CD4-positive, alpha-beta memory T cell (primary cell): ENCODE measurements at regions of chrX and their contacts with region 1.

Region 1: GRCh38 chrX:1580735-1581531 is 10.5 kb upstream of the AKAP17A start:
- DNase-seq: peak; percentile 70 to 78 (median 75)
- H3K4me3 ChIP-seq: no peak overlapping the region
- H3K4me3 Mint-ChIP-seq: peak overlapping the region in 6 of 8 donors; percentile 25 to 71 (median 58)
- H3K27ac ChIP-seq: no peak overlapping the region
- H3K27ac Mint-ChIP-seq: peak overlapping the region; percentile 17 to 87 (median 70)
- H3K4me1 ChIP-seq: peaks cover 60% of the 10 kb centered on the region
- H3K4me1 Mint-ChIP-seq: peaks cover 11 to 22% (median 16%) of the 10 kb centered on the region in 4 donors
- H3K27me3 ChIP-seq: no peaks in the 10 kb centered on the region
- H3K27me3 Mint-ChIP-seq: no peaks in the 10 kb centered on the region

Region 2: GRCh38 chrX:1246816-1247215 is 334.1 kb before region 1 on chrX:
- CTCF ChIA-PET with region 1: no interaction called
- POLR2A ChIA-PET with region 1: no interaction called
- intact Hi-C with region 1: loop called (anchors 1 kb)
- DNase-seq: peak; percentile 67 to 78 (median 72)
- H3K4me3 ChIP-seq: no peak overlapping the region
- H3K4me3 Mint-ChIP-seq: peak overlapping the region in 3 of 8 donors; percentile 30 to 80 (median 44)
- H3K27ac ChIP-seq: no peak overlapping the region
- H3K27ac Mint-ChIP-seq: peak overlapping the region in 6 of 7 donors; percentile 37 to 90 (median 75)
- H3K4me1 ChIP-seq: peaks cover 26% of the 10 kb centered on the region
- H3K4me1 Mint-ChIP-seq: peaks cover 16 to 32% (median 23%) of the 10 kb centered on the region in 4 donors
- H3K27me3 ChIP-seq: no peaks in the 10 kb centered on the region
- H3K27me3 Mint-ChIP-seq: no peaks in the 10 kb centered on the region

Region 3: DNA sequence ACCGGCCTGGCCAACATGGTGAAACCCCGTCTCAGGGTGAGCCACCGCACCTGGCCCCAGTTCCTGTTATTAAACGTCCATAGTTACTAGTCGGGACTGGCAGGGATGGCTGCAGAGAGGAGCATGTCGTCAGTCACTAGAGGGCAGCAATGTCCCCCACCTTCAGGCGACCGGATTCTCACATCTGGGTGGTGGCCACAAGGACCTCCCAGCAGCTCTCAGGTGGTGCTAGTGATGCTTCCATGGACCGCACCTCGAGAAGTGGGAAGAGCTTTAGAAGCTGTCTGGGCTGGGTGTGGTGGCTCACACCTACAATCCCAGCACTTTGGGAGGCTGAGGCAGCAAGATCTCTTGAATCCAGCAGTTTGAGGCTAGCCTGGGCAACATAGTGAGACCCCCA is 257.6 kb before region 1 on chrX:
- CTCF ChIA-PET with region 1: no interaction called
- POLR2A ChIA-PET with region 1: no interaction called
- intact Hi-C with region 1: loop called (anchors 5 kb)
- DNase-seq: peak; percentile 33 to 49 (median 47)
- H3K4me3 ChIP-seq: no peak overlapping the region
- H3K4me3 Mint-ChIP-seq: no peak overlapping the region
- H3K27ac ChIP-seq: no peak overlapping the region
- H3K27ac Mint-ChIP-seq: no peak overlapping the region
- H3K4me1 ChIP-seq: no peaks in the 10 kb centered on the region
- H3K4me1 Mint-ChIP-seq: peaks cover 0 to 5% (median 3%) of the 10 kb centered on the region in 4 donors
- H3K27me3 ChIP-seq: no peaks in the 10 kb centered on the region
- H3K27me3 Mint-ChIP-seq: peaks cover 8 to 9% of the 10 kb centered on the region in 2 donors

Region 4: DNA sequence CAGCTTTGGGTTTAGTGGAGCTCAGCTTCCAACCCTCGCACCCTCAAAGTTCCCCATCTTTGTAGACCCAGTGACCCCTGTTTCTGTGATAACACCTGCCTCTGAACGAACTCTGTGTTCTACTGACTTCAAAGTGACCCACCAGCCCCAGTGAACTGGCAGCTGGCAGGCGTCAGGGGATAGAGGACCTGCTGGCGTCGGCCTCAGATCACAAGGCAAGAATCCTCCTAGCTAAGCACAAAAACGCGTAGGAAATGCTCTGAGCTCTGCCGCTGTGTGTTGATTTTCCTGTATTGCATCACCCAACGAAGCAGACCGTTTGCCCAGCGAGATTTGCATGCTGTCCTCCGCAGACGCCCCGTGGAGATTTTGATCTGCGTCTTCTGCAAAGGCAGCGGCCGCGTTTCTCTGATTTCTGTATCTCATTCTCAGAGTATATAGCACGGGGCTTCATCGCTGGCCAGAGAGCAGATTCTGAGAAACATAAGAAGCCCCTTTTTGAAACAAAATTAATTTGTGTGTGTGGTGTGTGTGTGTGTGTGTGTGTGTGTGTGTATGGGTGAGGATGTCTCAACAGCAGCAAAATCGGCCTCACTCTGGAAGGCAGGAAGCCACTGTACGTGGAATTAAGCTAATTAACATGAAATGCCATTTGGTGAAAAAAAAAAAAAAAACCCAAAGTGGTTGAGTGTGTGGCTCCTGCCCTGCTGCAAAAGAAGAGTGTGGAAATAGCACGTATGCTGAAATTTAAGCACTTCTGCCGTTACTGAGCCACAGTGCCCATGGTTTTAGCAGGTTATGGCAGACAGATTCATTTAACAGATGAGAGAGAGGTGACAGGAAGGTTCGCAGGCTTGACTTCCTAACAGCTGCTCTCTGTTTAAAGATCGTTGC is 99.0 kb before region 1 on chrX:
- CTCF ChIA-PET with region 1: no interaction called
- POLR2A ChIA-PET with region 1: no interaction called
- intact Hi-C with region 1: loop called (anchors 1 kb)
- DNase-seq: peak; percentile 80 to 88 (median 82)
- H3K4me3 ChIP-seq: peak overlapping the region in 1 of 2 donors; percentile 27
- H3K4me3 Mint-ChIP-seq: peak overlapping the region; percentile 66 to 93 (median 82)
- H3K27ac ChIP-seq: peak overlapping the region; percentile 63
- H3K27ac Mint-ChIP-seq: peak overlapping the region; percentile 90 to 99 (median 95)
- H3K4me1 ChIP-seq: peaks cover 71% of the 10 kb centered on the region
- H3K4me1 Mint-ChIP-seq: peaks cover 46 to 78% (median 56%) of the 10 kb centered on the region in 4 donors
- H3K27me3 ChIP-seq: no peaks in the 10 kb centered on the region
- H3K27me3 Mint-ChIP-seq: no peaks in the 10 kb centered on the region

Region 5: GRCh38 chrX:1491851-1492349 is 89.0 kb before region 1 on chrX:
- CTCF ChIA-PET with region 1: no interaction called
- POLR2A ChIA-PET with region 1: no interaction called
- intact Hi-C with region 1: loop called (anchors 1 kb)
- DNase-seq: peak; percentile 55 to 74 (median 71)
- H3K4me3 ChIP-seq: no peak overlapping the region
- H3K4me3 Mint-ChIP-seq: peak overlapping the region in 3 of 8 donors; percentile 8 to 36 (median 21)
- H3K27ac ChIP-seq: no peak overlapping the region
- H3K27ac Mint-ChIP-seq: peak overlapping the region; percentile 48 to 92 (median 87)
- H3K4me1 ChIP-seq: peaks cover 11% of the 10 kb centered on the region
- H3K4me1 Mint-ChIP-seq: peaks cover 16 to 45% (median 32%) of the 10 kb centered on the region in 4 donors
- H3K27me3 ChIP-seq: no peaks in the 10 kb centered on the region
- H3K27me3 Mint-ChIP-seq: no peaks in the 10 kb centered on the region

Region 6: DNA sequence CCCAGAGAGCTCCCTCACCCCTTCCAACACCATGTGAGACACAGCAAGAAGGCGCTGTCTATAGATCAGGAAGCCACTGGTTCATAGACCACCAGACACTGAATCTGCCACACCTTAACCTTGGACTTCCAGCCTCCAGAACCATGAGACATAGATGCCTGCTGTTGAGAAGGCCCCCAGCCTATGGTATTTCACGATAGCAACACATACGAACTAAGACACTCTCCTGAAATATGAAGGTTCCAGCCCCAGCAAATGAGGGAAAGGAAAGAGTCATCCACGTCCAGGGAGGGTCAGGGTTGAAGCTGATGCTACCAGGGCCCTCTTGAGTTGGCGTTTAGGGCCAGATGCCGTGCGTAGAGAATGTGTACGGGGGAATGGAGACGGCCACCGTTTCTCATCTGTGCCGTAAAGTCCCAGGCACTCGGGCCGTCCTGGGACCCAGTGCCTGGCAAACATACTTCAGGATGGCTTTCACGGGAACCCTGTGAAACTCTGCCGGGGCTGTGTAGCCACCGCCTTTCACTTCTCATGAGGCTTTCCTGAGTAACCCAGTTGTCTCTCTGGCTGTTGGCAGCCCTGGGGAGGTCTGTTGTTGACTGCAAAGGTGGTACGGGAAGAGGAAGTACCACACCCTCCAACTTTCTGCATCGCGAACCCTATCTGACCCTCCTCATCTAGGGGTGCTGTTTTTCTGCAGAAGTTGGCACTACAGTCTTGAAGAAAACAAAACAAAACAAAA is 26.3 kb before region 1 on chrX:
- CTCF ChIA-PET with region 1: no interaction called
- POLR2A ChIA-PET with region 1: no interaction called
- intact Hi-C with region 1: loop called (anchors 1 kb)
- DNase-seq: peak; percentile 78 to 88 (median 82)
- H3K4me3 ChIP-seq: peak overlapping the region; percentile 24 to 33
- H3K4me3 Mint-ChIP-seq: peak overlapping the region; percentile 48 to 86 (median 79)
- H3K27ac ChIP-seq: peak overlapping the region; percentile 56
- H3K27ac Mint-ChIP-seq: peak overlapping the region; percentile 94 to 98 (median 98)
- H3K4me1 ChIP-seq: peaks cover 91% of the 10 kb centered on the region
- H3K4me1 Mint-ChIP-seq: peaks cover 44 to 85% (median 66%) of the 10 kb centered on the region in 4 donors
- H3K27me3 ChIP-seq: no peaks in the 10 kb centered on the region
- H3K27me3 Mint-ChIP-seq: no peaks in the 10 kb centered on the region

Region 7: GRCh38 chrX:1673337-1673736 is 92.4 kb after region 1 on chrX:
- CTCF ChIA-PET with region 1: no interaction called
- POLR2A ChIA-PET with region 1: no interaction called
- intact Hi-C with region 1: no loop called
- DNase-seq: peak in 4 of 5 donors; percentile 32 to 52 (median 44)
- H3K4me3 ChIP-seq: no peak overlapping the region
- H3K4me3 Mint-ChIP-seq: no peak overlapping the region
- H3K27ac ChIP-seq: no peak overlapping the region
- H3K27ac Mint-ChIP-seq: no peak overlapping the region
- H3K4me1 ChIP-seq: no peaks in the 10 kb centered on the region
- H3K4me1 Mint-ChIP-seq: peaks cover 4 to 9% (median 7%) of the 10 kb centered on the region in 4 donors
- H3K27me3 ChIP-seq: no peaks in the 10 kb centered on the region
- H3K27me3 Mint-ChIP-seq: no peaks in the 10 kb centered on the region